H1 (cell line): ENCODE measurements at regions of chr12 and their contacts with region 1.

Region 1: DNA sequence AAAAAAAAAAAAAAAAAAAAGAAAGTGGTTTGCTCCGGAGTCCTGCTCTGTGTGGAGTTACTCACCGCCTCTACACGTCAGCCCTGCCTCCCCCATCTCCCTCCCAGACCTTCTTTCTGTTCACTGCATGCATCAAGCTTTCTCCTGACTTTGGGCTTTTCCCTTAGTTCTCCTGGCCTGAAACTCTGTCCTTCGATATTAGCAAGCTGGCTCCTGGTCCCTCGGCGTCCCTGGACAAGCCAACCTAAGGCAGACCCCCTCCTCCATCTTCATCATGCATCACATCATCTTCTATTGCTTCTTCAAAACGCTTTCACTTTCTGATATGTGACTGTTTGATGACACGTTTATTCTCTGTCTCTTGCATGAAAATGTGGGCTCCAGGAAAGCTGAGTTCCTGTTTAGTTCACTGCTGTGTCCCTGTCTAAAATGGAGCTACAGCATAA is 40.6 kb downstream of the SLC15A4 start:
- DNase-seq: no peak
- H3K4me3 ChIP-seq: no peak overlapping the region
- H3K27ac ChIP-seq: no peak overlapping the region
- H3K4me1 ChIP-seq: peaks cover 0 to 3% (median under 1%) of the 10 kb centered on the region in 4 experiments; a peak in 2 of 7 replicates
- H3K27me3 ChIP-seq: no peaks in the 10 kb centered on the region
- CTCF ChIP-seq: no peak
- EP300 ChIP-seq: no peak
- POLR2A ChIP-seq: no peak
- RAD21 ChIP-seq: no peak

Region 2: DNA sequence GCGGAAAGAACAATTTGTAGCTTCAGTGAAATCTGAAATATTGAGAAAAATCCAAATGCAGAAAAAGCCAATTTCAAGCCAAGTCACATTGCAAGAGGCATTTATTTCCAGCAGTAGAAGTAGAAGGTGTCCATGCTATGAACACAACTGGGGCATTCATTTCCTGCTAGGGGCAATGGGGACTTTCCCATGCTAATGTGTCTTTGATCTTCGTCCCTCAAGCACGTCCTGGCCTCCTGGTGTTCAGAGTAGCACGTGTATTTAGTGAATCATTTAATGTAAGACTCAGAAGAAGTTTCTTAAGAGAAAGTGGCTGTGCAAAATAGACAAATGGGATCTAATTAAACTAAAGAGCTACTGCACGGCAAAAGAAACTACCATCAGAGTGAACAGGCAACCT is 248.2 kb before region 1 on chr12:
- CTCF ChIA-PET with region 1: no interaction called
- POLR2A ChIA-PET with region 1: no interaction called
- DNase-seq: no peak
- H3K4me3 ChIP-seq: no peak overlapping the region
- H3K27ac ChIP-seq: no peak overlapping the region
- H3K4me1 ChIP-seq: peaks cover 0 to 2% (median 0%) of the 10 kb centered on the region in 4 experiments; a peak in 1 of 7 replicates
- H3K27me3 ChIP-seq: no peaks in the 10 kb centered on the region
- CTCF ChIP-seq: no peak
- EP300 ChIP-seq: no peak
- POLR2A ChIP-seq: no peak
- RAD21 ChIP-seq: no peak

Region 3: GRCh38 chr12:128763395-128763794 is 19.8 kb before region 1 on chr12:
- CTCF ChIA-PET with region 1: interaction called, 47 read pairs
- POLR2A ChIA-PET with region 1: no interaction called
- DNase-seq: no peak
- H3K4me3 ChIP-seq: no peak overlapping the region
- H3K27ac ChIP-seq: no peak overlapping the region
- H3K4me1 ChIP-seq: peaks cover 0 to 3% (median 1%) of the 10 kb centered on the region in 4 experiments; a peak in 5 of 7 replicates
- H3K27me3 ChIP-seq: peaks cover 0 to 4% (median 2%) of the 10 kb centered on the region in 4 experiments; a peak in 4 of 7 replicates
- CTCF ChIP-seq: no peak
- EP300 ChIP-seq: no peak
- POLR2A ChIP-seq: no peak
- RAD21 ChIP-seq: no peak; a peak in 1 of 4 replicates

Region 4: DNA sequence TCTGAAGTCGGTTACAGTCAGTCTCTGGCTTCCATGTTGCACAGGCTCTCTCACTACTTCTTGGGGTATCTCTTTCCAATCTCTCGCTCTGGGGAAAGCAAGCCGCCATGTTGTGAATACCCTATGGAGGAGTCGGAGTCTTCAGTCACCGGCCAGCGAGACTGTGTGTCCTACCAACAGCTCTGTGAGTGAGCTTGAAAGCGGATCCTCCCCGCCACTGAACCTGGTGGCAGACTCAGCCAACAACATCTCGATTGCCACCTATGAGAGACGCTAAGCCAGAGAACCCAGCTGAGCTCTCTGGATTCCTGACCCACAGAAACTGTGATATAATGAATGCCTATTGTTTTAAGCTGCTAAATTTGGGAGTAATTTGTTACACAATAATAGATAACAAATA is 10.9 kb before region 1 on chr12:
- CTCF ChIA-PET with region 1: interaction called, 47 read pairs
- POLR2A ChIA-PET with region 1: no interaction called
- DNase-seq: no peak
- H3K4me3 ChIP-seq: no peak overlapping the region
- H3K27ac ChIP-seq: no peak overlapping the region
- H3K4me1 ChIP-seq: peaks cover 0 to 2% (median 0%) of the 10 kb centered on the region in 4 experiments; a peak in 5 of 7 replicates
- H3K27me3 ChIP-seq: no peaks in the 10 kb centered on the region; a peak in 1 of 7 replicates
- CTCF ChIP-seq: no peak
- EP300 ChIP-seq: no peak
- POLR2A ChIP-seq: no peak
- RAD21 ChIP-seq: no peak

Region 5: DNA sequence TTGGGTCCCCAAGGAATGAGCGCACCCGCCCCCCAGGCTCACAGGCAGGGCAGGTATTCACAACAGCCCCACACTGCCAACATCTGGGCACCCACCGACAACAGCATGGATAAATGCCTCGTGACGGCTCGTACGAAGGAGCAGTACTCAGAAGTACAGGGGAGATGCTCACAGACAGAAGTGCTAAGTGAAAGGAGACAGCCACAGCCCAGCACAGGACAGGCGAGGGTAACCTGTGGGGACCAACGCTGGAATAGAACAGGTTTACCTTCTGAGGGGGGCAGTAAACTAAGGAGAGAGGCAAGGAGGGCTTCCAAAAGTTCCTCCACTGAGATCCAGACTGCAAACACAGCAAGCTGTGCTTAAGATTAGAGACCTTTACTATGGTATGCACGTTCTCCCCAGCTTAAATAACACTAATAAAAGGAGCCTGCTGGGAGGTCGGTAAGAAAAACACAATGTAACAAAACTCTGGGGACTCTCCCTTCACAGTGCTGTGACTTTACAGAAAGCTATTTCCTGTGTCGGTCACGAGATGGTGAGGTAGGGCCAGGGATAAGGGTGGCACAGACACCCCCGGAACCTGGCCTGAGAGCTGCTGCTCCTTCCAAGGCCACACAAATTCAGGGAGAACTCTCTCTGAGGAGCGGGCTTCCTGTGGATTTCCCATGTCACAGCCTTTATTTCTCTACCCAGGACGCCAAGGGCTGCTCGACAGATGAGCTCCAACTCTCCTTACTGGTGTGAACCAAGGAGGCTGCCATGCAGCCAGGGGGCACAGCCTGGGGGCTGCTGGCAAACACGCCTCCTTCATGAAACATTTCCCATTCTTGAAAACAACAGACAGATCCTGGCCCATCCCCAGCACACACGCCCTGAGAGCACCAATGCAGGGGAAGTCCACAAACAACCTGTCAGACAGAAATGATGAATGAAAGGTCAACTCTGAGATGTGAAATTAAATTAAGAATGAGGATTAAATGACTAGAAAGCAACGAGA is 14.3 kb after region 1 on chr12:
- CTCF ChIA-PET with region 1: interaction called, 23 read pairs
- POLR2A ChIA-PET with region 1: no interaction called
- DNase-seq: peak in 1 of 2 experiments; percentile 50
- H3K4me3 ChIP-seq: no peak overlapping the region; a peak in 1 of 8 replicates
- H3K27ac ChIP-seq: no peak overlapping the region
- H3K4me1 ChIP-seq: peaks cover 7 to 14% (median 11%) of the 10 kb centered on the region in 4 experiments
- H3K27me3 ChIP-seq: no peaks in the 10 kb centered on the region; a peak in 2 of 7 replicates
- CTCF ChIP-seq: no peak
- EP300 ChIP-seq: peak in 1 of 2 experiments; percentile 65; a peak in 1 of 3 replicates
- POLR2A ChIP-seq: no peak
- RAD21 ChIP-seq: peak; percentile 13 to 20; a peak in 2 of 4 replicates